ENCODE measurements at regions of chr4 and their contacts with region 1.

Region 1: GRCh38 chr4:54233277-54233696 is 4.2 kb downstream of the PDGFRA start:
- DNase-seq: peak; percentile 80 to 89 (median 88)
- H3K4me3 ChIP-seq: peak overlapping the region; percentile 30 to 79 (median 68)
- H3K27ac ChIP-seq: no peak overlapping the region
- H3K4me1 ChIP-seq: peaks cover 0 to 50% (median 31%) of the 10 kb centered on the region in 4 experiments
- H3K27me3 ChIP-seq: peaks cover 0 to 50% (median 33%) of the 10 kb centered on the region in 5 experiments

Region 2: GRCh38 chr4:52983563-52984303 is 1249.6 kb before region 1 on chr4:
- CTCF ChIA-PET with region 1: interaction called, 13 read pairs
- POLR2A ChIA-PET with region 1: no interaction called
- DNase-seq: peak; percentile 56 to 69 (median 64)
- H3K4me3 ChIP-seq: peak overlapping the region in 1 of 7 experiments; percentile 23
- H3K27ac ChIP-seq: no peak overlapping the region
- H3K4me1 ChIP-seq: peaks cover 4 to 11% (median 6%) of the 10 kb centered on the region in 4 experiments
- H3K27me3 ChIP-seq: no peaks in the 10 kb centered on the region

Region 3: GRCh38 chr4:53196882-53197771 is 1036.2 kb before region 1 on chr4:
- CTCF ChIA-PET with region 1: interaction called, 10 read pairs
- POLR2A ChIA-PET with region 1: no interaction called
- DNase-seq: peak; percentile 83 to 91 (median 88)
- H3K4me3 ChIP-seq: peak overlapping the region in 2 of 7 experiments; percentile 64 to 70
- H3K27ac ChIP-seq: no peak overlapping the region
- H3K4me1 ChIP-seq: peaks cover 0 to 18% (median 3%) of the 10 kb centered on the region in 4 experiments
- H3K27me3 ChIP-seq: no peaks in the 10 kb centered on the region

Region 4: DNA sequence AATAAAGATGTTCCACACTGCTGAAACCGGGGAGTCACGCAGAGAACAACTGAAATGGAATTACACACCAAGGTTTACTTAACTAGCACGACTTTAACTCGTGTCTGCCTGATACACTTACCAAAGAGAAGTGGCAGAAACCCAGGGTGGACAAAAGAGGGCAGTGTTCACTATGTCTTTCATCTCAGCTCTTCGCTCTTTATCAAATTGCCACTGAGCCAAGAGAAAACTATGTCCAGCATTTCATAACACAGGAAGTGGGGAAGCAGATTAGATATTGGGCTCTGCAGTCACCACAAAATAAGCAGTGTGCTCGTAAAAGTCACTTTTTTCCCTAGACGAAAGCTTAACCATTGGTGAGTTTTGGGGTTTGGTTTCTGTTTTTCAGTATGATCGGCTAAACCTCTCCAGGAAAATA is 324.6 kb before region 1 on chr4:
- CTCF ChIA-PET with region 1: interaction called, 76 read pairs
- POLR2A ChIA-PET with region 1: no interaction called
- DNase-seq: peak; percentile 82 to 87 (median 86)
- H3K4me3 ChIP-seq: peak overlapping the region in 5 of 7 experiments; percentile 21 to 73 (median 41)
- H3K27ac ChIP-seq: no peak overlapping the region
- H3K4me1 ChIP-seq: peaks cover 7 to 29% (median 9%) of the 10 kb centered on the region in 4 experiments
- H3K27me3 ChIP-seq: peaks cover 0 to 16% (median 5%) of the 10 kb centered on the region in 5 experiments

Region 5: GRCh38 chr4:54104907-54105306 is 128.4 kb before region 1 on chr4:
- CTCF ChIA-PET with region 1: interaction called, 11 read pairs
- POLR2A ChIA-PET with region 1: no interaction called
- DNase-seq: peak in 2 of 3 donors; percentile 51 to 63
- H3K4me3 ChIP-seq: no peak overlapping the region
- H3K27ac ChIP-seq: no peak overlapping the region
- H3K4me1 ChIP-seq: peaks cover 4 to 46% (median 32%) of the 10 kb centered on the region in 4 experiments
- H3K27me3 ChIP-seq: peaks cover 44 to 100% (median 76%) of the 10 kb centered on the region in 5 experiments

Region 6: DNA sequence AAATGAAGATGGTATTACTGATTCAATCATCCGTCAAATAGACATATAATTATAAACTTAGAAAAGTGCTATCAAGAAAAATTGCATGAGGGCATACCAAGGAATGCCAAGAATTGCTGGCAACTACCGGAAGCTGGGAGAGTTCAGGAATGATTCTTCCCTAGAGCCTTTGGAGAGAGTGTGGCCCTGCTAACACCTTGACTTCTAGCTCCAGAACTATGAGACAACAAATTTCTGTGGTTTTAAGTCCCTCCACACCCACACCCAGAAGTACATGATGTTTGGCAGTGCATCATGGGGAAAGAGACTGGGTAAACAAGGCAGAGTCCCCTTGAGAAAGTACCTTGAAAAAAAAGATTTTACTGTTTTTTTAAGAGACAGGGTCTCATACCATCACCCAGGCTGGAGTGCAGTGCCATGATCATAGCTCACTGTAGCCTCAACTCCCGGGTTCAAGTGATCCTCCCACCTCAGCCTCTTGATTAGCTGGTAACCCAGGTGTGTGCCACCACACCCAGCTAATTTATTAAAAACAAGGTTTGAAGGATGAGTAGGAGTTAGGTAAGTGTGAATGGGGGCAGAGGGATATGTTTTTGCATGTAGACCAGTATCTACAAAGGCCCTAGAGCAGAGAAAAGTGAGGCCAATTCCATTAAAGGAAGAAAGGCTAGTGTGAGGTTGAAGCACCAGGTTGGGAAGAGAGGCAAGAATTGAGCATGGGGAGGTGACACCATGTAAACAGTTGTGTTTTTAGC is 80.3 kb before region 1 on chr4:
- CTCF ChIA-PET with region 1: no interaction called
- POLR2A ChIA-PET with region 1: no interaction called
- DNase-seq: no peak
- H3K4me3 ChIP-seq: no peak overlapping the region
- H3K27ac ChIP-seq: no peak overlapping the region
- H3K4me1 ChIP-seq: no peaks in the 10 kb centered on the region
- H3K27me3 ChIP-seq: no peaks in the 10 kb centered on the region